H1 (cell line): ENCODE measurements at regions of chr6 and their contacts with region 1.

Region 1: DNA sequence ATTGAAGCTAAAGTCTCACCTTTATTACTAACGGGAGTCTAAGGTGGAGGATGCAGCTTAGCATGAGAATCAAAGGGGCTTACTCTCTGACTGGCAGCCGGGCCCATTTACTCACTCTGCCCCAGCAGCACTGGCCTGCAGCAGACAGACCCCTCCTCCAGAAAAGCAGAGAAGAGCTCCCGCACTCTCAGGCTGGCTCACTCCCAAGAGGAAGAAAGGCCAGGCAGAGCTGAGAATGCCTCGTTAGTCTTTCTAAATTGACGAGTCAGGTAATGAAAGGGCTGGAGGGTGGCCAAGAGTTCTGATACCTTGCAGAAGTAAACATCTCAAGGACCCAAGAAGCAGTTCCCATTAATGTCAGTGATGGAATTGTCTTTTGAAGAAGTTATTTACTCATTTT is 44.5 kb upstream of the IL20RA start:
- DNase-seq: no peak
- H3K4me3 ChIP-seq: no peak overlapping the region
- H3K27ac ChIP-seq: no peak overlapping the region
- H3K4me1 ChIP-seq: no peaks in the 10 kb centered on the region
- H3K27me3 ChIP-seq: no peaks in the 10 kb centered on the region
- CTCF ChIP-seq: no peak
- EP300 ChIP-seq: no peak
- POLR2A ChIP-seq: no peak
- RAD21 ChIP-seq: no peak

Region 2: DNA sequence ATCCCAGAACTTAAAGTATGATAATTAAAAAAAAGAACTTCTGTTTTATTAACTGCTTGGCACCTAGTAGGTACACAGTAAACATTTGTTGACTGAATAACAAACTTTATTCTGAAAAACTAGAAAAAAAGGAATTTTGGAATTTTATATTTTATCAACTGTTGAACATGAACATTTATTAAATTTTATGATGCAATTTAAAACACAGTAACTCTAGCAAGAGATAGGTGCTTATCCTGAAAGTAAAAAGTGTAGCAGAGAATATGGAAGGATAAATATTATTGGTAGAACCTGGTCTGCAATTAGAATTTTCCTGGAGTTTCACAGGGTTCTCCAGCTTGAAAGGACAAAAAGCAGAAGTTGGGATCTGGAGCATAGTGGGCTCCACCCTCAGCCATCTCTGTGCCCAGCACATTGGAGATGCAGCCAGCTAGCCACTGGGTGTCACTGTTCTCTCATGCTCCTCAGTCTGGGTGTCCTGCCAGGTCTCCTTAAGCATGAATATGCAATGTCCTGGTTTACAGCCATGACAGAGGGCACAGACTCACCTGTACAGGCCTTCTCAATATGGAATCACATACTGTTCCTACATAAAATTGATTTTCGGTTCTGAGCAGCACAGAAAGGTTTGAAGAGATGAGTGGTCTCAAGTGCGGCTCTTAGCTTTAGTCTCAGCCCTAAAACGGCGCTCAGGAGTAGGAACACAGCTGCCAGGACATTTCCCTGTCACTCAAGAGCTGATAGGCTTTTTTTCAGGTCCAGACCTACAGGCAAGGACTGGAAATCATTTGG is 12.8 kb before region 1 on chr6:
- CTCF ChIA-PET with region 1: interaction called, 22 read pairs
- POLR2A ChIA-PET with region 1: no interaction called
- DNase-seq: peak; percentile 56 to 75
- H3K4me3 ChIP-seq: no peak overlapping the region
- H3K27ac ChIP-seq: no peak overlapping the region
- H3K4me1 ChIP-seq: peaks cover 0 to 6% (median under 1%) of the 10 kb centered on the region in 4 experiments; a peak in 2 of 7 replicates
- H3K27me3 ChIP-seq: no peaks in the 10 kb centered on the region
- CTCF ChIP-seq: peak; percentile 85 to 98 (median 97)
- EP300 ChIP-seq: no peak
- POLR2A ChIP-seq: no peak
- RAD21 ChIP-seq: peak; percentile 94

Region 3: GRCh38 chr6:137181891-137182653 is 92.8 kb after region 1 on chr6:
- CTCF ChIA-PET with region 1: no interaction called
- POLR2A ChIA-PET with region 1: no interaction called
- DNase-seq: no peak
- H3K4me3 ChIP-seq: no peak overlapping the region
- H3K27ac ChIP-seq: no peak overlapping the region
- H3K4me1 ChIP-seq: no peaks in the 10 kb centered on the region
- H3K27me3 ChIP-seq: no peaks in the 10 kb centered on the region
- CTCF ChIP-seq: no peak
- EP300 ChIP-seq: no peak
- POLR2A ChIP-seq: no peak
- RAD21 ChIP-seq: no peak